ENCODE measurements at regions of chr6 and their contacts with region 1.

Region 1: GRCh38 chr6:73520688-73521350 is at the start of gene EEF1A1:
- DNase-seq: peak; percentile 98 to 100 (median 99)
- ATAC-seq: peak; percentile 82
- H3K4me3 ChIP-seq: peak within 1 kb of the TSS; percentile 82 to 99
- H3K4me3 Mint-ChIP-seq: peak within 1 kb of the TSS; percentile 92
- H3K27ac ChIP-seq: peak within 1 kb of the TSS; percentile 94 to 97
- H3K27ac Mint-ChIP-seq: peak within 1 kb of the TSS; percentile 97
- H3K4me1 ChIP-seq: peaks cover 49% of the 10 kb centered on the region
- H3K4me1 Mint-ChIP-seq: peaks cover 62% of the 10 kb centered on the region
- H3K27me3 ChIP-seq: no peaks in the 10 kb centered on the region
- H3K27me3 Mint-ChIP-seq: no peaks in the 10 kb centered on the region
- CTCF ChIP-seq: no peak
- total RNA-seq, gene EEF1A1: 16,418 to 17,118 TPM

Region 2: DNA sequence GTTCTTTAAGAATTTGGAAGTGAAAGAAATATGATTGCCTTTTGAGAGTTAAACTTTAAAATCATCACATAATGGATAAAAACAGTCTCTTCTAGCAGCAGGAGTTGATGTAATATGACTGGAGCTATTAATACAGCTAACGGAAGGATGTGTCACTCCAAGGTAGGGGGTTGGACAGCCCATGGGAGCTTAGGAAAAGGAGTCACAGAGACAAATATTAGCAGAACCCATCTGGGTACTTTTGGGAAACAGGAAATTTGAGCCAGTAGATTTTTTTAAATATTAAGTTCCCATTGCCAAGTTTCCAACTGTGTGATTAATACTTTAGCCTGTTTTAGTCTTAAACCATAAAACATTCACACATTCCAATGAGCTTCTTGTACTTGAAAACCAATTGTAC is 1799.2 kb before region 1 on chr6:
- CTCF ChIA-PET with region 1: no interaction called
- POLR2A ChIA-PET with region 1: no interaction called
- intact Hi-C with region 1: no loop called
- DNase-seq: no peak
- ATAC-seq: no peak
- H3K4me3 ChIP-seq: no peak overlapping the region
- H3K4me3 Mint-ChIP-seq: no peak overlapping the region
- H3K27ac ChIP-seq: no peak overlapping the region
- H3K27ac Mint-ChIP-seq: no peak overlapping the region
- H3K4me1 ChIP-seq: no peaks in the 10 kb centered on the region
- H3K4me1 Mint-ChIP-seq: no peaks in the 10 kb centered on the region
- H3K27me3 ChIP-seq: no peaks in the 10 kb centered on the region
- H3K27me3 Mint-ChIP-seq: no peaks in the 10 kb centered on the region
- CTCF ChIP-seq: no peak

Region 3: DNA sequence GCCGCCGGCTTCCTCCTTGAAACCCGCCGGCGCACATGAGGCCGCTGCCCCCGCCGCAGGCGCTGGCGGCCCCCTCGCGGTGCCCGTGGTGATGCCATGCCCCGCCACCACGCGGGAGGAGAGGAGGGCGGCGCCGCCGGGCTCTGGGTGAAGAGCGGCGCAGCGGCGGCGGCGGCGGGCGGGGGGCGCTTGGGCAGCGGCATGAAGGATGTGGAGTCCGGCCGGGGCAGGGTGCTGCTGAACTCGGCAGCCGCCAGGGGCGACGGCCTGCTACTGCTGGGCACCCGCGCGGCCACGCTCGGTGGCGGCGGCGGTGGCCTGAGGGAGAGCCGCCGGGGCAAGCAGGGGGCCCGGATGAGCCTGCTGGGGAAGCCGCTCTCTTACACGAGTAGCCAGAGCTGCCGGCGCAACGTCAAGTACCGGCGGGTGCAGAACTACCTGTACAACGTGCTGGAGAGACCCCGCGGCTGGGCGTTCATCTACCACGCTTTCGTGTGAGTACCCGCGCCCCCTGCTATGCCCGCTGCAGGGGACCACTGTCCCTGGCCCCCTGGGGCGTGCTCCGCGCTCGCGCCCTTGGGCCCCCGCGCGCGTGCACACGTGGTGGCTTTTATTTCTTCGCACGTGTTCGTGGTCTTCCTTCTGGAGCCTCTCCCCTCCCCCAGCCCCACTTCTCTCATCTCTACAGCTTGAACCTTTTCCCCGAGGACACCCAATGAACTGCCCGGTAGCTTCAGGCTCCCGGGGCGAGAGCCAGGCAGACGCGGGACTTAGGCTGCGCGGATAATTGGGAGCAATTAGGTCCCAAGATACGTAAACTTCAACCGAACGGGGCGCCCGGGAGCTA is 898.5 kb before region 1 on chr6:
- CTCF ChIA-PET with region 1: no interaction called
- POLR2A ChIA-PET with region 1: no interaction called
- intact Hi-C with region 1: loop called in 1 of 2 experiments (anchors 5 kb)
- DNase-seq: peak; percentile 34 to 82 (median 59)
- ATAC-seq: peak; percentile 42
- H3K4me3 ChIP-seq: peak overlapping the region; percentile 79 to 80
- H3K4me3 Mint-ChIP-seq: peak overlapping the region; percentile 96
- H3K27ac ChIP-seq: peak overlapping the region in 1 of 2 experiments; percentile 17
- H3K27ac Mint-ChIP-seq: peak overlapping the region; percentile 19
- H3K4me1 ChIP-seq: peaks cover 21% of the 10 kb centered on the region
- H3K4me1 Mint-ChIP-seq: peaks cover 57% of the 10 kb centered on the region
- H3K27me3 ChIP-seq: no peaks in the 10 kb centered on the region
- H3K27me3 Mint-ChIP-seq: no peaks in the 10 kb centered on the region
- CTCF ChIP-seq: peak; percentile 15

Region 4: GRCh38 chr6:73461537-73462350 is 59.1 kb before region 1 on chr6 and contains the start of gene MTO1:
- CTCF ChIA-PET with region 1: no interaction called
- POLR2A ChIA-PET with region 1: interaction called, 66 read pairs
- intact Hi-C with region 1: loop called (anchors 1 to 2 kb)
- DNase-seq: peak; percentile 64 to 95 (median 84)
- ATAC-seq: peak; percentile 93
- H3K4me3 ChIP-seq: peak within 1 kb of the TSS; percentile 97 to 98
- H3K4me3 Mint-ChIP-seq: peak within 1 kb of the TSS; percentile 97
- H3K27ac ChIP-seq: peak within 1 kb of the TSS; percentile 93 to 97
- H3K27ac Mint-ChIP-seq: peak within 1 kb of the TSS; percentile 98
- H3K4me1 ChIP-seq: peaks cover 8% of the 10 kb centered on the region
- H3K4me1 Mint-ChIP-seq: peaks cover 40% of the 10 kb centered on the region
- H3K27me3 ChIP-seq: no peaks in the 10 kb centered on the region
- H3K27me3 Mint-ChIP-seq: no peaks in the 10 kb centered on the region
- CTCF ChIP-seq: no peak
- total RNA-seq, gene MTO1: 35.7 to 37.0 TPM

Region 5: DNA sequence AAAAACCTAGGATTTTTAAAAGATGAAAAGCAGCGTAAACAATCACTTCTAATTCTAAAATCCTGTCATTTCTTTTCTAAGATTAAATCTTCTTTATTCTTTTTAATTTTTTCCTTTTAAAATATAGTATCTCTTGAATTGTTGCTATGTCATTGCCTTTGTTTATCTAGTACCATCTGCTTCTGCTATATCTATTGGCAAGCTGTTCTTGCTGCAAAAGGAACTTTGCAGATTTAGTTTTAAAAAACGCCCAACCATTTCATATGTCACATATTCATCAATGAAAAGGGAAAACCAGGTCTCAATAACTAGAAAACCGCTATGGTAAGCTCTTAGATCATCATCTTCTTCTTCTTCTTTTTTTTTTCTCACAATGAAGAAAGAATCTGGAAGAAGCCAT is 11.5 kb after region 1 on chr6:
- CTCF ChIA-PET with region 1: interaction called, 3 read pairs
- POLR2A ChIA-PET with region 1: interaction called, 11 read pairs
- intact Hi-C with region 1: no loop called
- DNase-seq: no peak
- ATAC-seq: no peak
- H3K4me3 ChIP-seq: no peak overlapping the region
- H3K4me3 Mint-ChIP-seq: no peak overlapping the region
- H3K27ac ChIP-seq: no peak overlapping the region
- H3K27ac Mint-ChIP-seq: no peak overlapping the region
- H3K4me1 ChIP-seq: no peaks in the 10 kb centered on the region
- H3K4me1 Mint-ChIP-seq: no peaks in the 10 kb centered on the region
- H3K27me3 ChIP-seq: no peaks in the 10 kb centered on the region
- H3K27me3 Mint-ChIP-seq: no peaks in the 10 kb centered on the region
- CTCF ChIP-seq: no peak

Region 6: DNA sequence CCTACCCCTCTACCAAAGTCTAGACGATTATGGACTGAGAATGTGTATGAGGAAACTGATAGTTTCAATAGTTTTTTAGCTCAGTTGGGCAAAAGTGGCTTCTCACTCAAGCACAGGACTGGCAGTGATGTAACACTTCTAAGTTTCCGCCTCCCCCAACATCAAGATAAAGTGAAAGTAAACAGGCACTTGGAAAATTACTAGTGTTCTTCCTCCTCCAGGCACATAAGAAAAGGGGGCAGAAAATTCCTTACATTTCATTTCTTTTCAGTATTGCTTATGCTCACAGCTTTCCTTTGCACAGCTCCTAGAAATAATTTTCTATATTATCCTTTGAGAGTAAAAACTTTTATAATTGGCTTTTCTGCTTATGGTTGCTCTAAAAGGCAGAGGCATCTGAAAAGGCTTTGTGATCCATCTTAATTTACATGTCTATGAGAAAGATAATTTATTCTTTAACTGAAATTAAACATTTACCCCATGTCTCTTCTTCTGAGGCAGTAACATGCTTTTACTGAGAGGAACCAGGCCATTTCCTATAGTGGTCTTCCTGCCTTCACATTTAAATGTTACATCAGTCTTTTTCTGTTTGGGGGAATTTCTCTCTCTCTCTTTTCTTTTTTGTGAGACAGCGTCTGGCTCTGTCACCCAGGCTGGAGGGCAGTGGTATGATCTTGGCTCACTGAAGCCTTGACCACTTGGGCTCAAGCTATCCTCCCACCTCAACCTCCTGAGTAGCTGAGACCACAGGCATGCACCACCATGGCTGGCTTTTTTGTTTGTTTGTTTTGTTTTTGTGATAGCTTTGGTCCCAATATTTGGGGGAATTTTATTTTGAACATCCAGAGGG is 65.0 kb after region 1 on chr6:
- CTCF ChIA-PET with region 1: no interaction called
- POLR2A ChIA-PET with region 1: interaction called, 89 read pairs
- intact Hi-C with region 1: loop called (anchors 1 to 2 kb)
- DNase-seq: peak in 7 of 9 experiments; percentile 20 to 87 (median 36)
- ATAC-seq: peak; percentile 82
- H3K4me3 ChIP-seq: peak overlapping the region; percentile 29 to 45
- H3K4me3 Mint-ChIP-seq: peak overlapping the region; percentile 80
- H3K27ac ChIP-seq: peak overlapping the region; percentile 62 to 98
- H3K27ac Mint-ChIP-seq: peak overlapping the region; percentile 99
- H3K4me1 ChIP-seq: peaks cover 15% of the 10 kb centered on the region
- H3K4me1 Mint-ChIP-seq: peaks cover 30% of the 10 kb centered on the region
- H3K27me3 ChIP-seq: no peaks in the 10 kb centered on the region
- H3K27me3 Mint-ChIP-seq: no peaks in the 10 kb centered on the region
- CTCF ChIP-seq: no peak

Region 7: GRCh38 chr6:73653571-73654424 is 133.0 kb after region 1 on chr6 and contains the start of gene SLC17A5:
- CTCF ChIA-PET with region 1: interaction called, 13 read pairs
- POLR2A ChIA-PET with region 1: interaction called, 112 read pairs
- intact Hi-C with region 1: loop called (anchors 1 to 2 kb)
- DNase-seq: peak; percentile 81 to 94 (median 88)
- ATAC-seq: peak; percentile 85
- H3K4me3 ChIP-seq: peak within 1 kb of the TSS; percentile 78 to 94
- H3K4me3 Mint-ChIP-seq: peak within 1 kb of the TSS; percentile 99
- H3K27ac ChIP-seq: peak within 1 kb of the TSS; percentile 92 to 95
- H3K27ac Mint-ChIP-seq: peak within 1 kb of the TSS; percentile 97
- H3K4me1 ChIP-seq: peaks cover 20% of the 10 kb centered on the region
- H3K4me1 Mint-ChIP-seq: peaks cover 29% of the 10 kb centered on the region
- H3K27me3 ChIP-seq: no peaks in the 10 kb centered on the region
- H3K27me3 Mint-ChIP-seq: no peaks in the 10 kb centered on the region
- CTCF ChIP-seq: no peak
- total RNA-seq, gene SLC17A5: 4.9 to 5.5 TPM

Region 8: DNA sequence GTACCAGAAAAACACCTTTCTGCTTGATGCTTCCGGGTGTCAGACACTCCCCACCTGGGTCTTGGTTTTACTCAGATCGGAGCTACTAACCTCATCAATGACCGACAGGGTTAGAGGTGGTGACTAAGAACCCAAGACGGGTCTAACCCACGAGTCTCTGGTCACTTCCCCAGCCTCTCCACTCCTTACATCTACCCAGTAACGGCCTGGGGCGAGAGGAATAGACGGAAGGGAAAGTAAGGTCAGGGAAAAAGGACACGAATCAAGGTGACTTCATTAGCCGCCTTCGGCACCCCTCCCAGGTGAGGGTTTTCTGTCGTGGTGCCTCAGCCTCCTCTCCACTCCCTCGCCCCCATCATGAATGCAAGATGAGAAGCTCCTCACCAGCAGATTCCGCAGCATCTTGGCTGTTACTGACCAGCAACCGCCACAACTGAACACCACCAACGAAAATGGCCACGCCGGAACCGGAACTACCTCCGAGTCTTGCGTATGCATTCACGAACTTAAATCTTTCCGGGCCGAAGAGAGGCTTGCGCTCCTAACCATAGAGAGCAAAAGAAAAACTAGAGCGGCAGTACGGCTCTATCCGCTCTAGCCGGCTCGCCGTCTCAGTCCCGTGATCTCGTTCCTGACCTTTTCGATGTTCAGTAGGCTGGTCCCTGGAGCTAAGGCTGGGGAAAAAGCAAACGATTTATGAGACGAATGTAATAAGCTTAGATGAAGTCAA is 1722.7 kb after region 1 on chr6 and contains the start of gene COX7A2:
- CTCF ChIA-PET with region 1: no interaction called
- POLR2A ChIA-PET with region 1: interaction called, 3 read pairs
- intact Hi-C with region 1: loop called (anchors 1 to 10 kb)
- DNase-seq: peak; percentile 71 to 94 (median 87)
- ATAC-seq: peak; percentile 94
- H3K4me3 ChIP-seq: peak within 1 kb of the TSS; percentile 94 to 98
- H3K4me3 Mint-ChIP-seq: peak within 1 kb of the TSS; percentile 99
- H3K27ac ChIP-seq: peak within 1 kb of the TSS; percentile 93 to 97
- H3K27ac Mint-ChIP-seq: peak within 1 kb of the TSS; percentile 100
- H3K4me1 ChIP-seq: peaks cover 6% of the 10 kb centered on the region
- H3K4me1 Mint-ChIP-seq: peaks cover 36% of the 10 kb centered on the region
- H3K27me3 ChIP-seq: no peaks in the 10 kb centered on the region
- H3K27me3 Mint-ChIP-seq: peaks cover 6% of the 10 kb centered on the region
- CTCF ChIP-seq: no peak
- total RNA-seq, gene COX7A2: 221 to 229 TPM